GM18951 (cell line): ENCODE measurements at regions of chr2 and their contacts with region 1.

Region 1: DNA sequence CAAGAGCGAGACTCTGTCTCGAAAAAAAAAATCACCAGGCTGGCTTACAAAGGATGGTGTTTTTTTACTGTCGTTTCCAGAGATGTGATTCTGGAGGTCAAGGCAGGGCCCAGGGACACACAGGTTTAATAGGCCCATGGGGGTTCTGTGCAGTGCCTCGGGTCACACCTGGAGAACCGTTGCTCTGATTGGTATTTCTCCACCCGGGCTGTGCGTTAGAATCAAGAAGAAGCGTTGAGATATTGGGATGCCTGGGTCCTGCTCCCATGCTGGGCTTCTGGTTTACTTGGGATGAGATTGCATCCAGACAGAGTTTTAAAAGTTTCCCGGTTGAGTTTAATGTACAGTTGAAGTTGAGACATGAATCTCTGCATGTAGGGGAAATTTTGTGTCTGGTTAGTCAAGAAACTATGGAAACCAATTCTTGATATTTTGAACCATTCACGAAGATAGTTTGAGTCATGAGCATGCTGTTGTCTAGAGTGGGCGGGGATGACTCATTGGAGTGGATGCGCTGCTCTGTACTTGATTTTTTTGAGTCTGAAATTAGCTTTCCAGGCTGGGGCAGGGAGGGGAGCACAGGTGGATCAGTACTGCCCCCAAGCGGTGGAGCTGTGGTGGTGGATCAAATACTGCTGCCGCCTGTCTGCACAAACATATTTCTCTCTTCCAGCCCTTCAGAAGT is 50.1 kb downstream of the GREB1 start:
- POLR2A ChIP-seq: no peak

Region 2: GRCh38 chr2:10832203-10832936 is 751.6 kb before region 1 on chr2:
- in situ Hi-C with region 1: loop called (anchors 25 kb)
- POLR2A ChIP-seq: no peak

Region 3: DNA sequence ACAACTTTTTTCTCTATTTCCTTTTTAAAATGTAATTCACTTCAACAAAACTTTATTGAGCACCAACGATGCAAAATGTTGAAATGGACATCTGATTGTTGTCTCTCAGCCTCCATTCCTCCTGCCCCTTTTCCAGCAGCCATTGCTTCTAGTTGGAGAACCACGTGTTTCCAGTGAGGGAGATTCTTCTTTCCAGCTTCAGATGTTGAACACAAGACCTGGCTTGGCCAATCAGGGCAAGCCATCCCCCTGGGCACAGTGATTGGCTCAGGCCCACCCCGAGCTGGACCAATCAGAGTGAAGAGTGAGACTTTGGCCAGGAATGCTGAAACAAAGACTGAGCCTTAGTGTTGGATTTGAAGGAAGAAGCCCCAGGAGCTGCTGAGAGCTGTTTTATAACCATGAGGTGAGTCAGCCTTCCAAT is 177.0 kb before region 1 on chr2:
- in situ Hi-C with region 1: no loop called
- POLR2A ChIP-seq: no peak

Region 4: DNA sequence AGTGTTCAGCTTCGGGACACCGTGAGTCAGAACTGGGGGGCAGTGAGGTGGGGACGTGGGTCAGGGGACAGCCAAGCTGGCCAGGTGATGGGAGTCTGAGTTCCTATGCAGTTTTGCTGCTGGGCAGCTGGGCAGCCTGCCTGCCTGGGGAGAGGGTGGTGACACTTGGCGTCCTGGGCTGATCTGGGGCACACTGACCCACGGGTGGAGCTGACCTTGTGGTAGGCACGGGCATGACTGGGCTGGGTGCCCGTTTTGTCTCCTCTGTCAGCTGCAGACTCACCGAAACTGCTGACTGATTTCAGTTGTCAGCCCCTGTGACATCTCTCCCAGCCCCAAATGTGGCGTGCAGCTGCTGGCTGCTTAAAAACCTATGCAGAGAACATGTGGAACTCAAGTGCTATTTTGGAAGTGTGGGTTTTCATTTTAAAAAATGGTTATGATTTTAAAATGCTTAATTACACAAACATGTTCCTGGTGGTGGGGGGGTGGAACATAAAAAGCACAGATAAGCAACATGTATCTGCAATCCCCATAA is 85.4 kb before region 1 on chr2:
- in situ Hi-C with region 1: loop called (anchors 10 kb)
- POLR2A ChIP-seq: no peak

Region 5: GRCh38 chr2:11663427-11663826 is 79.4 kb after region 1 on chr2:
- in situ Hi-C with region 1: no loop called
- POLR2A ChIP-seq: no peak